ENCODE measurements at regions of chr9 and their contacts with region 1.

Region 1: GRCh38 chr9:129884220-129885017 is 49.2 kb downstream of the USP20 start:
- DNase-seq: peak; percentile 71
- ATAC-seq: peak; percentile 79
- H3K4me3 ChIP-seq: no peak overlapping the region
- H3K27ac ChIP-seq: no peak overlapping the region
- H3K4me1 ChIP-seq: peaks cover 28% of the 10 kb centered on the region
- H3K27me3 ChIP-seq: no peaks in the 10 kb centered on the region
- CTCF ChIP-seq: no peak
- POLR2A ChIP-seq: no peak
- RAD21 ChIP-seq: no peak

Region 2: DNA sequence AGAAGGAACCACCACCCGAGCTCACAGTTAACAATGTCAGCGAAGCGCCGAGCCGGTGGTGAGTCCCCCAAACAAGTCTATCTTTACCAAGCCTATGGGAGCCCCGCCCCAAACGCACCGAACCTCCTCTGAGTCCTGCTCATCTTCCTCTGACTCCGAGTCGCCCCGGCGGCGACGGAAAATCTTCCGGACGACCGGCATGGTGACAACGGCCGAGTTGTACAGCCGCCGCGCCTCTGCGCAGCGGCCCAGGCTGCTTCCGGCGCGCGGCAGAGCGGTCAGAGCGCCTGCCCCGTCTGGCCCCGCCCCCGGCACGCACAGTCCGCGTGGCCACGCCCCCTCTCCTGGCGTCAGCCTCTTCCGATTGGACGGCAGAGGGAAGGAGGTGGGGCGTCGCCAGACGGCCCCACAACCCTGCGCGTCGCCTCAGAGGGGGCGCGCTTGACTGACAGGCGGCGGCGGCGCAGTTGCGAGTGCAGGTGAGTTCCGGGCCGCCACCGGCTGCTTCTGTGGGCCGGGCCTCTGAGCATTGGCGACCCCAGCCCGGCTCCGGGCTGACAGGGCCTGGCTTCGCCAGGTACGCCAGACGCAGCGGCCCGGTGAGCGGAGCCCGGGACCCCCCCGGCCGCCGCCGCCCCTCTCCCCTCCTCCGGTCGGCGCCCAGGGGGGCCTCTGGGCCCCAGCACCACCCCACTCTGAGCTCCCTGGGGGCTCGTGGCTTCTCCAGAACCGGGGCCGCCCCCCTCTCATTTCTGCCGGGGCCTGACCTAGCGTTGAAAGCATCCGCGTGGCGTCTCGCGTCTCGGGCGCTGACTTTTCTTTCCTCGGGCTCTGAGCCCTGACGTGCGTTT is 49.2 kb before region 1 on chr9 and contains the starts of genes C9orf78 and USP20:
- CTCF ChIA-PET with region 1: no interaction called
- POLR2A ChIA-PET with region 1: interaction called, 12 read pairs
- dilution Hi-C with region 1: no loop called
- in situ Hi-C with region 1: no loop called
- intact Hi-C with region 1: no loop called
- DNase-seq: peak; percentile 91
- ATAC-seq: peak; percentile 96
- H3K4me3 ChIP-seq: peak within 1 kb of the TSS; percentile 94
- H3K27ac ChIP-seq: peak within 1 kb of the TSS; percentile 79
- H3K4me1 ChIP-seq: peaks cover 13% of the 10 kb centered on the region
- H3K27me3 ChIP-seq: no peaks in the 10 kb centered on the region
- CTCF ChIP-seq: no peak
- POLR2A ChIP-seq: peak; percentile 95
- RAD21 ChIP-seq: no peak
- total RNA-seq, gene C9orf78: 29.8 and 57.5 TPM in 2 replicates
- total RNA-seq, gene USP20: 3.8 and 4.4 TPM in 2 replicates

Region 3: GRCh38 chr9:129900263-129901027 is 16.0 kb after region 1 on chr9:
- CTCF ChIA-PET with region 1: no interaction called
- POLR2A ChIA-PET with region 1: no interaction called
- dilution Hi-C with region 1: no loop called
- in situ Hi-C with region 1: no loop called
- intact Hi-C with region 1: no loop called
- DNase-seq: no peak
- ATAC-seq: no peak
- H3K4me3 ChIP-seq: no peak overlapping the region
- H3K27ac ChIP-seq: no peak overlapping the region
- H3K4me1 ChIP-seq: no peaks in the 10 kb centered on the region
- H3K27me3 ChIP-seq: no peaks in the 10 kb centered on the region
- CTCF ChIP-seq: no peak
- POLR2A ChIP-seq: no peak
- RAD21 ChIP-seq: no peak

Region 4: GRCh38 chr9:129962889-129963703 is 78.7 kb after region 1 on chr9:
- CTCF ChIA-PET with region 1: no interaction called
- POLR2A ChIA-PET with region 1: no interaction called
- dilution Hi-C with region 1: no loop called
- in situ Hi-C with region 1: no loop called
- intact Hi-C with region 1: loop called (anchors 5 kb)
- DNase-seq: peak; percentile 49
- ATAC-seq: peak; percentile 57
- H3K4me3 ChIP-seq: peak overlapping the region; percentile 52
- H3K27ac ChIP-seq: peak overlapping the region; percentile 84
- H3K4me1 ChIP-seq: peaks cover 23% of the 10 kb centered on the region
- H3K27me3 ChIP-seq: no peaks in the 10 kb centered on the region
- CTCF ChIP-seq: no peak
- POLR2A ChIP-seq: no peak
- RAD21 ChIP-seq: no peak

Region 5: DNA sequence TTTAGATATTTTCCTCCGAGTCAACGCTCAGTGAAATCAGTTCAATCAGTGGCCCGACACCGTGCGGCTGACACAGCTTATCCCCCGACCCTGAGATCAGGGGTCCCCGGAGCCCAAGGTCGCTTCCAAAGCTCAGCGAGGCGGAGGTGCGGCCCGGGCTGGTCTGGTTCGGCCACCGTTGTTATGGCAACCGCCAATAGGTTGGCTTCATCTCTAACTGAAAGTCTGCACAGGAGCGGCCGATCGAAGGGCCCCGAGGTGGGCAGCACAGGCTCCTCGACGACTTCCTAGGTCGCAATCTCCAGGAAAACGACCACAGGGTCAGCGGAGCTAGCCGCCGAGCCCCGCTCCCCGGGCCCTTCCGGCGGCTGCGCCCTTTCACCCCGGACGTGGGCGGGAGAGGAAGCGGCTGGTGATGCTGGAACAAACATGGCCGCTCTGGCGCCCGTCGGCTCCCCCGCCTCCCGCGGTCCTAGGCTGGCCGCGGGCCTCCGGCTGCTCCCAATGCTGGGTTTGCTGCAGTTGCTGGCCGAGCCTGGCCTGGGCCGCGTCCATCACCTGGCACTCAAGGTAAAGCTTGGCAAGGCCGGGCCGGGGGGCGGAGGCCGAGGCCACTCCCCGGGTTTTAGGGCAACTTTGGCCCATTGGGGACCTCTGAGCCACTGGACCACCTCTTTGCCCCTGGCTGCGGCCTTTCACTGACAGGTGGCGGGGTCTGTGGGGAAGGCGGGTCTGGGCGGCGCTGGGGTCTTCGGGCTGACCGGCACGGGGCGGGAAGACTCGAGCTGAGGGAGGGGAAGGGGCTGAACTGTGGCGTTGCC is 169.3 kb after region 1 on chr9 and contains the start of gene GPR107:
- CTCF ChIA-PET with region 1: no interaction called
- POLR2A ChIA-PET with region 1: no interaction called
- dilution Hi-C with region 1: no loop called
- in situ Hi-C with region 1: loop called (anchors 25 kb)
- intact Hi-C with region 1: no loop called
- DNase-seq: peak; percentile 57
- ATAC-seq: peak; percentile 97
- H3K4me3 ChIP-seq: peak within 1 kb of the TSS; percentile 79
- H3K27ac ChIP-seq: peak within 1 kb of the TSS; percentile 86
- H3K4me1 ChIP-seq: no peaks in the 10 kb centered on the region
- H3K27me3 ChIP-seq: no peaks in the 10 kb centered on the region
- CTCF ChIP-seq: no peak
- POLR2A ChIP-seq: peak; percentile 84
- RAD21 ChIP-seq: peak; percentile 6; the same call in 1 of the 2 replicates
- total RNA-seq, gene GPR107: 16.7 and 17.8 TPM in 2 replicates

Region 6: GRCh38 chr9:130235897-130236668 is 351.7 kb after region 1 on chr9:
- CTCF ChIA-PET with region 1: no interaction called
- POLR2A ChIA-PET with region 1: no interaction called
- dilution Hi-C with region 1: no loop called
- in situ Hi-C with region 1: no loop called
- intact Hi-C with region 1: loop called (anchors 10 kb)
- DNase-seq: peak; percentile 50
- ATAC-seq: peak; percentile 63
- H3K4me3 ChIP-seq: no peak overlapping the region
- H3K27ac ChIP-seq: no peak overlapping the region
- H3K4me1 ChIP-seq: peaks cover 8% of the 10 kb centered on the region
- H3K27me3 ChIP-seq: no peaks in the 10 kb centered on the region
- CTCF ChIP-seq: peak; percentile 87
- POLR2A ChIP-seq: no peak
- RAD21 ChIP-seq: peak; percentile 88